ENCODE measurements at regions of chr20 and their contacts with region 1.

Region 1: GRCh38 chr20:59782986-59783640 is 150.3 kb downstream of the SYCP2 start:
- DNase-seq: peak; percentile 48
- ATAC-seq: peak; percentile 75
- H3K4me3 ChIP-seq: no peak overlapping the region
- H3K27ac ChIP-seq: no peak overlapping the region
- H3K4me1 ChIP-seq: no peaks in the 10 kb centered on the region
- H3K27me3 ChIP-seq: no peaks in the 10 kb centered on the region
- CTCF ChIP-seq: peak; percentile 97

Region 2: DNA sequence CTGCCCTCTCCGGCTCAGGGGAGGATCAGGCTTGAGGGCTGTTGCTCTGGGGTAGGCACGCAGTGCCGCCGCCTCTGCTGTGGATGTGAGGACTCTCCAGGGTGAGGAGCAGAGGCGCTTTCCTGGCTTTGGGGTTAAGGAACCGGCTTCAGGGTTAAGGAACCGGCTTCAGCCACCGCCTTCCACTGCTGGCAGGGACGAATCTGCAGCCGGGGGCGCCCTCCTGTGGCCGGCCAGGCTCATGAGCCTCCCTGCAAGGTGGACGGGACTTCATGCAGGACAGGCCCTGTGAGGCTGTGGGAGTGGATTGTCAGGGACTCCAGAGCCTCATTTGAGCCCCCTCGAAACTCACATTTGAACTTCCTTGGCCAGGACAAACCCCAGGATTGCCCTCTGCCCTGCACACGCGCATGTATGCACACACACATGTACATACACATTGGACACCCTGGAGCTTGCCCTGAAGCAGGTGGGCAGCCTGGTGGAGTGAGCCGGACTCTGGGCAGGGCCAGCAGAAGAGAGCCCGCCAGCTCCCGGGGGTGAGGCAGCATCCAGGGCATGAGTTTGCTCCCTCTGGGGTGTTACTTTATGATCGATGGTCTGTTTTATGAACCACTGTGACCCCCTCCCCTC is 31.9 kb before region 1 on chr20:
- CTCF ChIA-PET with region 1: no interaction called
- POLR2A ChIA-PET with region 1: no interaction called
- in situ Hi-C with region 1: no loop called
- intact Hi-C with region 1: no loop called
- DNase-seq: peak; percentile 5
- ATAC-seq: peak; percentile 96
- H3K4me3 ChIP-seq: no peak overlapping the region
- H3K27ac ChIP-seq: no peak overlapping the region
- H3K4me1 ChIP-seq: no peaks in the 10 kb centered on the region
- H3K27me3 ChIP-seq: peaks cover 5% of the 10 kb centered on the region; the same call in 1 of the 2 replicates
- CTCF ChIP-seq: peak; percentile 91

Region 3: DNA sequence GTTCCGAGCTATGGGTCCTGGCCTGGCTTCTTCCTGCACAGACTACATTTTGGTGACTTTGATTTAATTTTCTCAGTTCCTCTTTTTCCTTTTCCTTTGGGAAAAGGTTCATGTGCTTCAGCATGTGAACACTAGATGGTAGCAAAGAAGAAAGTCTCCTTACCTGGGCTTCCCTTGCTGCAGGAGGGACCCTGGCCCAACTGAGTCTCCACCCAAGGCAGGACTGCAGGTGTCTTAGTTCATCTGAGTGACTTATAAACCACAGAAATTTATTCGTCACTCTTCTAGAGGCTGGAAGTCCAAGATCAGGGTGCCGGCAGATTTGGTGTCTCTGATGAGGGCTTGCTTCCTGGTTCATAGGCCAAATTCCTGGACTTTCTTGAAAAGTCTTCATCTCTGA is 12.8 kb before region 1 on chr20:
- CTCF ChIA-PET with region 1: no interaction called
- POLR2A ChIA-PET with region 1: no interaction called
- in situ Hi-C with region 1: no loop called
- intact Hi-C with region 1: no loop called
- DNase-seq: no peak
- ATAC-seq: no peak
- H3K4me3 ChIP-seq: no peak overlapping the region
- H3K27ac ChIP-seq: no peak overlapping the region
- H3K4me1 ChIP-seq: no peaks in the 10 kb centered on the region
- H3K27me3 ChIP-seq: peaks cover 2% of the 10 kb centered on the region
- CTCF ChIP-seq: no peak; the same call in 1 of the 2 replicates

Region 4: DNA sequence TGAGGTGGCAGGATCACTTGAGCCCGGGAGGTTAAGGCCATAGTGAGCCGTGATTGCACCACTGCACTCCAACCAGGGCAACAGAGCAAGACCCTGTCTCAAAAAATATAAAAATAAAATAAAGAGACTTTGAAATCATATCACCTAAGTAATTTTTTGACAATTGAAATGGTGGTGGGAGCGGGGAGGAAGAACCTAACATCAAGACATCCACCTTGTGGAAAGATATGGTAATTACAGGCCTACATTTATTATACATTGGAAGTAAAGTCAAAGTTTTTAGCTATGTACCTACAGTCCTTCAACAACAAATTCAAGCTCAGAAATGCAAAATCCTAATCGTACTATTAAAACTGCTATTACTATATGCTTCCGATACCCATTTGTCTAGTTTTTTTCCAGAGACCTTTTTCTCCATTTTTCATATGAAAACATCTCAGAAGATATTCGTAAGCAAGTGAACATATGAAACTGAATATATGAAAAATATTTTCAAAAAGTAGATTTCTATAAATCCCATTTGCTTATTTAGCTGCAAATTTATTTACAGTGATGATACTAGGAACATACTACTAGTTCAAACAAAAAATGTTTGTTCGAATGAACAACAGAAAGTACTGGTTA is 67.0 kb after region 1 on chr20:
- CTCF ChIA-PET with region 1: interaction called, 7 read pairs
- POLR2A ChIA-PET with region 1: no interaction called
- in situ Hi-C with region 1: no loop called
- intact Hi-C with region 1: loop called (anchors 1 kb)
- DNase-seq: no peak
- ATAC-seq: peak; percentile 68; the same call in 1 of the 2 replicates
- H3K4me3 ChIP-seq: no peak overlapping the region
- H3K27ac ChIP-seq: no peak overlapping the region
- H3K4me1 ChIP-seq: 0 out of 2 replicates have a peak, but pooled peaks cover 3% of the 10 kb centered on the region
- H3K27me3 ChIP-seq: no peaks in the 10 kb centered on the region
- CTCF ChIP-seq: peak; percentile 70

Region 5: DNA sequence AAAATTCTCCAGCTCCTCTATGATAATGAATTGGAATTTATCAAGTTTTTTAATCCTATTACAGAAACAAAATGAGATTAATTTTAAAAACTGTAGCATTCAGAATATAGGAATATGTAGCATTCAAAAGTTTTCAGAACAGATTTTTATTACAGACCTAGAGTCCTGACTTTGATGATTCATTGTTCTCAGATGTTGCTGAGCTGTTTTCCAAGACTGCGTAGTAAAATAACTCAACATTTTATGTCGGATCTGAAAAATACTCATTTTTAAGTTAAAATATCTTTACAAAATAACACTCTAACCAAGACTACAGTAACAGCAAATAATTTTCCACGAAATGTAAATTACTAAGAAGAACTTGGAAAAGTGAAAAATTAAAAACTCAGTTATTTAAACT is 83.2 kb after region 1 on chr20:
- CTCF ChIA-PET with region 1: no interaction called
- POLR2A ChIA-PET with region 1: interaction called, 19 read pairs
- in situ Hi-C with region 1: no loop called
- intact Hi-C with region 1: no loop called
- DNase-seq: no peak
- ATAC-seq: no peak
- H3K4me3 ChIP-seq: no peak overlapping the region
- H3K27ac ChIP-seq: no peak overlapping the region
- H3K4me1 ChIP-seq: no peaks in the 10 kb centered on the region
- H3K27me3 ChIP-seq: no peaks in the 10 kb centered on the region
- CTCF ChIP-seq: no peak